H1 (cell line): ENCODE measurements at regions of chr12 and their contacts with region 1.

Region 1: GRCh38 chr12:121925358-121925695 is 6.9 kb downstream of the CFAP251 start:
- DNase-seq: no peak
- H3K4me3 ChIP-seq: no peak overlapping the region
- H3K27ac ChIP-seq: no peak overlapping the region
- H3K4me1 ChIP-seq: peaks cover 0 to 11% (median 0%) of the 10 kb centered on the region in 4 experiments; a peak in 2 of 7 replicates
- H3K27me3 ChIP-seq: no peaks in the 10 kb centered on the region
- CTCF ChIP-seq: no peak
- EP300 ChIP-seq: no peak
- POLR2A ChIP-seq: no peak
- RAD21 ChIP-seq: no peak

Region 2: GRCh38 chr12:121802846-121803630 is 122.3 kb before region 1 on chr12:
- CTCF ChIA-PET with region 1: no interaction called
- POLR2A ChIA-PET with region 1: interaction called, 13 read pairs
- DNase-seq: peak; percentile 70 to 88
- H3K4me3 ChIP-seq: peak overlapping the region; percentile 70 to 88 (median 81)
- H3K27ac ChIP-seq: peak overlapping the region; percentile 97
- H3K4me1 ChIP-seq: peaks cover 12 to 28% (median 21%) of the 10 kb centered on the region in 4 experiments
- H3K27me3 ChIP-seq: no peaks in the 10 kb centered on the region
- CTCF ChIP-seq: no peak
- EP300 ChIP-seq: no peak
- POLR2A ChIP-seq: peak in 1 of 2 experiments; percentile 97; a peak in 2 of 3 replicates
- RAD21 ChIP-seq: no peak